Common myeloid progenitor, CD34-positive (primary cell): ENCODE measurements at regions of chr11 and their contacts with region 1.

Region 1: DNA sequence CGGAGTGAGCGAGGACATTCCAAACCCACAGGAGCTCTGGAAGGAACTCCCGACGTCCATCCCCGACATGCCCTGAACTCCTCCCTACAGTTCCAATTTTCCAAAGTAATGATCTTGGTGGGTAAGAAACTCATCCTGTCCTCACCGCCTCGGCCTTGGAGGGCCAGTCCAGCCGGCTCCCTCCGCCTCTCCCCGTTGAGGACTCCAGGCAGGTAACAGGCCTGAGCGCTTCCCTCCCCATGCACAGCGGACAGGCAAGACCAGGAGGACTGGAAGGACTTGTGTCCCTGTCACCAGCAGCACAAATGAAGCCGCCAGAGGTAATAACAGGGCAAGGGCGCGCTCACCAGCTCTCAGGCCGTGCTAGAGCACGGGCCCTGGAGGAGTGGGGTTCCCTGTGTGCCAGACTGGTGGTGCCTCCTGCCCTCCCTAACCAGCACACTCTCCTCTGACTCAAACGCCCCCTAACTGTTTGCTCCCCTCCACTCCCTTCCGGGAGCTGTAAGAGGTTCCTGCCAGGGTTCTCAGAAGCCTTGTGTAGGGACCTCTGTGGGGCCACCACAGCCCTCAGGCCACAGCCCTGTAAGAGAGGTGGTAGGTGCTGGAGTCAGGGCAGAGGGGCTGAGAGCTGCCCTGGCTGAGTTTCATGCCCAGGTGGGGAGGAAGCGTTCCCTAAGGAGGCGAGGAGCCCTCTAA is 17.1 kb downstream of the OVOL1 start:
- DNase-seq: peak in 1 of 3 donors; percentile 38
- H3K4me3 ChIP-seq: no peak overlapping the region
- H3K27ac ChIP-seq: no peak overlapping the region
- H3K4me1 ChIP-seq: peaks cover 0 to 4% (median 0%) of the 10 kb centered on the region in 4 experiments
- H3K27me3 ChIP-seq: peaks cover 0 to 31% (median 5%) of the 10 kb centered on the region in 5 experiments

Region 2: GRCh38 chr11:65791691-65792213 is 12.2 kb before region 1 on chr11:
- CTCF ChIA-PET with region 1: interaction called, 12 read pairs
- POLR2A ChIA-PET with region 1: no interaction called
- DNase-seq: peak; percentile 63 to 93 (median 91)
- H3K4me3 ChIP-seq: peak overlapping the region in 1 of 7 experiments; percentile 7
- H3K27ac ChIP-seq: no peak overlapping the region
- H3K4me1 ChIP-seq: peaks cover 0 to 37% (median 32%) of the 10 kb centered on the region in 4 experiments
- H3K27me3 ChIP-seq: peaks cover 0 to 30% (median 15%) of the 10 kb centered on the region in 5 experiments

Region 3: GRCh38 chr11:65817835-65818742 is 14.1 kb after region 1 on chr11:
- CTCF ChIA-PET with region 1: interaction called, 12 read pairs
- POLR2A ChIA-PET with region 1: no interaction called
- DNase-seq: peak; percentile 87 to 93 (median 92)
- H3K4me3 ChIP-seq: peak overlapping the region; percentile 50 to 89 (median 75)
- H3K27ac ChIP-seq: peak overlapping the region in 1 of 2 experiments; percentile 62
- H3K4me1 ChIP-seq: peaks cover 3 to 17% (median 15%) of the 10 kb centered on the region in 4 experiments
- H3K27me3 ChIP-seq: no peaks in the 10 kb centered on the region